ENCODE measurements at regions of chr15 and their contacts with region 1.

Region 1: GRCh38 chr15:40217159-40217824 is 21.6 kb upstream of the PAK6 start:
- DNase-seq: peak; percentile 64
- CTCF ChIP-seq: peak; percentile 67

Region 2: GRCh38 chr15:40044717-40045571 is 172.3 kb before region 1 on chr15:
- CTCF ChIA-PET with region 1: interaction called, 12 read pairs
- POLR2A ChIA-PET with region 1: no interaction called
- DNase-seq: peak; percentile 88
- CTCF ChIP-seq: peak; percentile 99

Region 3: GRCh38 chr15:40121911-40122638 is 95.2 kb before region 1 on chr15:
- CTCF ChIA-PET with region 1: no interaction called
- POLR2A ChIA-PET with region 1: no interaction called
- DNase-seq: no peak
- CTCF ChIP-seq: no peak

Region 4: DNA sequence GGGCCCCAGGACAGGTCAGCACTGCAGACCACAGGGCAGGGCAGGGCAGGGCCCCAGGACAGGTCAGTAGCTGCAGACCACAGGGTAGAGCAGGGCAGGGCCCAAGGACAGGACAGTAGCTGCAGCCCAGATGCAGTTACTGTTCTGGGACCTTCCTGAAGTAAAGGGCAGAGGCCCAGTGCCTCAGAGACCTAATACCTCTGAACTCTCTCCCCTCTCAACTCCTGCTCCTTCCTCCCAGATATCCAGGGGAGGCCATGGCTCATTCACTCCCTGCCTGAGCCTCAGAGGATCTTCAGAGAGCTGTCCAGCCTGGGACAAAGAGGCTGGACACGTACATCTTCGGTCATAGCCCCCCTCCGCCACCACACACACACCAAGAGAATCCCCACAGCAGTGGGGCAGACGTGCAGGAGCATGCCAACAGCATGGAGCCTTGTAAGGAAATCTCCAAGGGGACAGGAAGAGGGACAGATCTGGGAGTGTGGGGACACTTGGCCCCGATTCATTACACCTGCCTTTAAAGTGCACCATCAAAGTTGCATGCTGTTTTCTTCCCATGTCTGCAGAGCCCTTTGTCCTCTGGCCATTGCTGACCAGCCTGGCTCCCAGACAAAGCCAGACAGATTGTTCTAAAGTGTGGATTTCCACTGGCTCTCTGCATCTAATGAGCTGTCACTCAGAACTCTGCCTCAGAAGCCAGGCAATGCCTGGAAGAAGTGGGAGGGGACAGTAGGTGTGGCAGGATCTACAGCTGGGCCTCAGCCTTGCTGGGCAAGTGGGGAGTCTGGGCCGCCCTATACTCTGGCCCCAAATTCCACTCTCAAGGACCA is 80.6 kb before region 1 on chr15:
- CTCF ChIA-PET with region 1: no interaction called
- POLR2A ChIA-PET with region 1: no interaction called
- DNase-seq: no peak
- CTCF ChIP-seq: no peak

Region 5: GRCh38 chr15:40182358-40183029 is 34.8 kb before region 1 on chr15:
- CTCF ChIA-PET with region 1: interaction called, 19 read pairs
- POLR2A ChIA-PET with region 1: no interaction called
- DNase-seq: no peak
- CTCF ChIP-seq: no peak

Region 6: DNA sequence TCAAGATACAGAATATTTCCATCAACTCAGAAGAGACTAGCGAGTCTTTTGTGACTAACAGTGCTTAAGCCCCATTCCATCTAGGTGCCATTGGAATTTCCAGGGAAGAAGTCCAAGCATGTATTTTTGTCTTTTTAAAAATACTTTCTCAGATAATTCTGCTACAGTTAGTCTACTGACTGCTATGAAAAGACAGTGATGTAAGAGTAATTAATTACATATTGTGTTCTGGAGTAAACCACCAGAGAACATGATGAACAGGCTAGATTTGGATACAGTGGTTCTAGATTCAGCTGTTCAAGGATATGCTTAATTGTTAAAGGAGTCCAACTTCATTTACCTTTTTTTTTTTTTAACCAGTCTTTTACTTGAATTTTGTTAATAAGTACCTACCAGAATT is 13.2 kb before region 1 on chr15:
- CTCF ChIA-PET with region 1: interaction called, 47 read pairs
- POLR2A ChIA-PET with region 1: no interaction called
- DNase-seq: no peak
- CTCF ChIP-seq: no peak

Region 7: GRCh38 chr15:40238532-40239403 is 21.5 kb after region 1 on chr15 and contains the start of gene PAK6:
- CTCF ChIA-PET with region 1: interaction called, 27 read pairs
- POLR2A ChIA-PET with region 1: no interaction called
- DNase-seq: no peak
- CTCF ChIP-seq: no peak

Region 8: GRCh38 chr15:40256638-40257235 is 39.4 kb after region 1 on chr15:
- CTCF ChIA-PET with region 1: interaction called, 525 read pairs
- POLR2A ChIA-PET with region 1: no interaction called
- DNase-seq: no peak
- CTCF ChIP-seq: no peak